CD4-positive, alpha-beta T cell (primary cell): ENCODE measurements at regions of chr1 and their contacts with region 1.

Region 1: GRCh38 chr1:44799770-44800584 is at the start of gene PLK3:
- DNase-seq: peak; percentile 97 to 100 (median 98)
- ATAC-seq: peak; percentile 77
- H3K4me3 ChIP-seq: peak within 1 kb of the TSS; percentile 99
- H3K4me3 Mint-ChIP-seq: peak within 1 kb of the TSS; percentile 99
- H3K27ac ChIP-seq: peak within 1 kb of the TSS; percentile 88 to 98
- H3K27ac Mint-ChIP-seq: peak within 1 kb of the TSS; percentile 86
- H3K4me1 ChIP-seq: peaks cover 48% of the 10 kb centered on the region
- H3K4me1 Mint-ChIP-seq: peaks cover 39% of the 10 kb centered on the region
- H3K27me3 ChIP-seq: no peaks in the 10 kb centered on the region
- H3K27me3 Mint-ChIP-seq: no peaks in the 10 kb centered on the region
- CTCF ChIP-seq: peak; percentile 79
- total RNA-seq, gene PLK3: 794 TPM

Region 2: GRCh38 chr1:44730741-44731512 is 69.0 kb before region 1 on chr1 and contains the start of gene RNU5D-1:
- CTCF ChIA-PET with region 1: interaction called, 14 read pairs
- POLR2A ChIA-PET with region 1: interaction called, 38 read pairs
- intact Hi-C with region 1: no loop called
- DNase-seq: peak; percentile 87 to 98 (median 94)
- ATAC-seq: peak; percentile 76
- H3K4me3 ChIP-seq: peak within 1 kb of the TSS; percentile 46
- H3K4me3 Mint-ChIP-seq: peak within 1 kb of the TSS; percentile 68
- H3K27ac ChIP-seq: peak within 1 kb of the TSS; percentile 93 to 96
- H3K27ac Mint-ChIP-seq: peak within 1 kb of the TSS; percentile 97
- H3K4me1 ChIP-seq: peaks cover 33% of the 10 kb centered on the region
- H3K4me1 Mint-ChIP-seq: peaks cover 35% of the 10 kb centered on the region
- H3K27me3 ChIP-seq: no peaks in the 10 kb centered on the region
- H3K27me3 Mint-ChIP-seq: no peaks in the 10 kb centered on the region
- CTCF ChIP-seq: peak; percentile 77
- total RNA-seq, gene RNU5D-1: not detected

Region 3: DNA sequence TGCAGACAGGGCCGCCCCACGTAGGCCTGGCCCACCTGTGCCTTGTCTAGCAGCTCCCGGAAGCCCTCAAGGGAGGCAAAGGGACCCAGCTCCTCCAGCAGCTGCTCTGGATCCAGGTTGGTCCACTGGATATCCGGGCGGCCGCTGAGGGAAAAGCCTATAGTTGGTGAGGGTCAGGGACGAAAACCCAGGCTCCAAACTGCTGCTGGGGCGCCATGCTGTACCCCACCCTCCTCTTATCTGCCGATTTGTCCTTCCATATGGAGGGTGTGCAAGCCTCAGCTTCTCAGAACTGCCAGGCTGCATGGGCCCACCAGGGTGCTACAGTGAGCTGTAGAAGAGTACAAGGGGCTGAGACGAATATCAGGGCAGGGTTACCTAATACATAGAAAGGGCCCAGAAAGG is 30.9 kb after region 1 on chr1:
- CTCF ChIA-PET with region 1: interaction called, 6 read pairs
- POLR2A ChIA-PET with region 1: interaction called, 599 read pairs
- intact Hi-C with region 1: loop called in 1 of 2 experiments (anchors 2 kb)
- DNase-seq: no peak
- ATAC-seq: no peak
- H3K4me3 ChIP-seq: no peak overlapping the region
- H3K4me3 Mint-ChIP-seq: no peak overlapping the region
- H3K27ac ChIP-seq: no peak overlapping the region
- H3K27ac Mint-ChIP-seq: no peak overlapping the region
- H3K4me1 ChIP-seq: peaks cover 8% of the 10 kb centered on the region
- H3K4me1 Mint-ChIP-seq: peaks cover 5% of the 10 kb centered on the region
- H3K27me3 ChIP-seq: no peaks in the 10 kb centered on the region
- H3K27me3 Mint-ChIP-seq: peaks cover 1% of the 10 kb centered on the region
- CTCF ChIP-seq: no peak

Region 4: DNA sequence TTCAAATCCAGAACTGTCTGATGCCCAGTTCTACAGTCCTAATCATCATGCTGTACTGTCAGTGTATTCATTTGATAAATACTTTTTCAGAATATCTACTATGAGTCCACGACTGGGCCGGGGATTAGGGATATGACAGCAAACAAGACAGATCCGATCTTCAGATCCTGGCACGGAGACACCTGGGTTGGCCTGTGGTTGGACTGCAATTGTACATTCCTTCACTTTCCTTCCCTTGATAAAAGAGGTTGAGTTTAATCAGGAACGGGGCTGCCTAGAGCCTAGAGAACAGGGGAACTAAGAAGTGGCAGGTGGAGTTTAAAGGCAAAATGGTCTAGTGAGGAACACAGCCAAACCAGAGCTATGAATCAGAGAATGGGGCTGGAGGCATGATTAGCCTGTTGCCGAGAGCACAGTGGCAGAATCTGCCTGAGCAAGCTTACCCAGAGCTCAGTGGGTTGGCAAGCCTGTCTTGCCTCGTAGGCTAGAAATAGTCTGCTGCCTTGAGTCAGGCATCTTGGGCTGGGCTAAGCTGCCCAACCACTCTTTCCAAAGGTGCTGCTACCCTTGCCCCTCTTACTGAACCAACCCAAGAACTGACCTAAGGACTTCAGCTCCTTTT is 81.1 kb after region 1 on chr1:
- CTCF ChIA-PET with region 1: no interaction called
- POLR2A ChIA-PET with region 1: no interaction called
- intact Hi-C with region 1: loop called in 1 of 2 experiments (anchors 10 kb)
- DNase-seq: no peak
- ATAC-seq: no peak
- H3K4me3 ChIP-seq: no peak overlapping the region
- H3K4me3 Mint-ChIP-seq: no peak overlapping the region
- H3K27ac ChIP-seq: no peak overlapping the region
- H3K27ac Mint-ChIP-seq: no peak overlapping the region
- H3K4me1 ChIP-seq: no peaks in the 10 kb centered on the region
- H3K4me1 Mint-ChIP-seq: no peaks in the 10 kb centered on the region
- H3K27me3 ChIP-seq: no peaks in the 10 kb centered on the region
- H3K27me3 Mint-ChIP-seq: no peaks in the 10 kb centered on the region
- CTCF ChIP-seq: no peak

Region 5: GRCh38 chr1:45205910-45206721 is 406.1 kb after region 1 on chr1 and contains the start of gene ZSWIM5:
- CTCF ChIA-PET with region 1: no interaction called
- POLR2A ChIA-PET with region 1: no interaction called
- intact Hi-C with region 1: loop called in 1 of 2 experiments (anchors 10 kb)
- DNase-seq: peak; percentile 23 to 88 (median 62)
- ATAC-seq: peak; percentile 85
- H3K4me3 ChIP-seq: peak within 1 kb of the TSS; percentile 74
- H3K4me3 Mint-ChIP-seq: peak within 1 kb of the TSS; percentile 99
- H3K27ac ChIP-seq: peak within 1 kb of the TSS in 1 of 2 donors; percentile 32
- H3K27ac Mint-ChIP-seq: peak within 1 kb of the TSS; percentile 80
- H3K4me1 ChIP-seq: peaks cover 20% of the 10 kb centered on the region
- H3K4me1 Mint-ChIP-seq: peaks cover 30% of the 10 kb centered on the region
- H3K27me3 ChIP-seq: peaks cover 0 to 3% of the 10 kb centered on the region in 2 experiments
- H3K27me3 Mint-ChIP-seq: peaks cover 16% of the 10 kb centered on the region
- CTCF ChIP-seq: no peak
- total RNA-seq, gene ZSWIM5: 0.91 to 1.1 TPM